ENCODE measurements at regions of chr1 and their contacts with region 1.

Region 1: DNA sequence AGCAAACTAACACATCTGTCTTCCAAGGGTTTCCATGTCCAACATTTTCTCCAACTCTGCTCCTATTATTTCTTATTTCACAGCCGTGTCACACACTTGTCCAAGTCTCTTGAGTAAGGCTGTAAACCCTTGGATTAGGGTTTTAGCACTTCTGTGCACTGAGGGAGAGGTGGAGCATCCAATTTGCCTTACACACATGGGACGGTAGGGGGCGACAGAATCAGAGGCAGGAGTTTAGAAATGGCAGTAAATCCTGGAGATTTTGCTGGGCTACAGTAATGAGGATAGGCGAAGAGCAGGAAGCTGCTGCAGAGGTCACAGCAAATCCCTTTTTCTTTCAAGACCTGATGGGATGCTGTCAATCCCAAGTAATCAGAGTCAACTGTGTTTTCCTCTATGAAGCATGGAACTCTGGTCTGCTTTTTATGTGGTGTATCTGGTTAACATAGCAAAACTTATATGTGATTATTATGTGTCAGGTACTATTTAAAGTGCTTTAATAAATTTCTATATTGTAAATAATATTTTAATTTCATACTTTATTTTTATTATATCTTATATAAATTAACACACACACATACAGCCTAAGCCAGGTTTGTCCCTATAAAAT is 15.4 kb upstream of the LCE5A start:
- DNase-seq: peak in 2 of 3 donors; percentile 19 to 36
- H3K4me3 ChIP-seq: no peak overlapping the region
- H3K27ac ChIP-seq: no peak overlapping the region
- H3K4me1 ChIP-seq: no peaks in the 10 kb centered on the region
- H3K27me3 ChIP-seq: peaks cover 0 to 8% (median 0%) of the 10 kb centered on the region in 5 experiments

Region 2: GRCh38 chr1:152479792-152480595 is 15.2 kb before region 1 on chr1:
- CTCF ChIA-PET with region 1: interaction called, 10 read pairs
- POLR2A ChIA-PET with region 1: no interaction called
- DNase-seq: peak; percentile 21 to 49 (median 49)
- H3K4me3 ChIP-seq: no peak overlapping the region
- H3K27ac ChIP-seq: no peak overlapping the region
- H3K4me1 ChIP-seq: peaks cover 0 to 4% (median 2%) of the 10 kb centered on the region in 4 experiments
- H3K27me3 ChIP-seq: no peaks in the 10 kb centered on the region

Region 3: DNA sequence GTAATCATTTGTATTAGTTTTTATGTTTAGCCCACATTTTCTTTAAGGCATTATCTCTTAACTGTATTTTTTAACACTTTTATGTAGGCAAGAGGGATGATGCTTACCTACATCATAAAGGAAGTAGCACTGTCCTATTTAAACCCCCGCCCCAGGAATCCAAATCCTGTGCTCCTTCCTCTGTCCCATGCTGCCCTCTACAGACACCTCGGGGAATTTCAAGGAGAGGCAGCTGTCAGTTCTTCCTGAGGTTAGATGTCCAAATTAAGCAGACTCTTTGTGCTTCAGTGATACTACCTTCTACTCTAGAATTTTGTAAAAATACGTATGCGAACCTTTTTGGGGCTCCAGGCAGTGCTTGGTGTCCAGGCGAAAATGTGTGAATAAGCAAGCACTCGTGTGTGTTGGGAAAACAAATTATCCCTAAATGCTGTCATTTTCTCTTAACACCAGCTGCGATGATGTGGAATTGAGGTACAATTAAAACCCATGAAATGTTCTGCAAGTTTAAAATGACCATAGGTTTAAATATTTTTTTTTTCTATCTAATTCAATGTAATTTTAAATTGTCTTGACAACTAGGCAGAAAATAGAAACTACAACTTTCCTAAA is 38.3 kb after region 1 on chr1:
- CTCF ChIA-PET with region 1: interaction called, 64 read pairs
- POLR2A ChIA-PET with region 1: interaction called, 3 read pairs
- DNase-seq: peak; percentile 40 to 61 (median 49)
- H3K4me3 ChIP-seq: no peak overlapping the region
- H3K27ac ChIP-seq: no peak overlapping the region
- H3K4me1 ChIP-seq: no peaks in the 10 kb centered on the region
- H3K27me3 ChIP-seq: peaks cover 0 to 10% (median 0%) of the 10 kb centered on the region in 5 experiments

Measured in common myeloid progenitor, CD34-positive (primary cell).